CD4-positive, alpha-beta T cell (primary cell): ENCODE measurements at regions of chr11 and their contacts with region 1.

Region 1: GRCh38 chr11:60775420-60775961 is 9.6 kb upstream of the MS4A10 start:
- DNase-seq: peak; percentile 70 to 92 (median 81)
- ATAC-seq: peak; percentile 99
- H3K4me3 ChIP-seq: no peak overlapping the region
- H3K4me3 Mint-ChIP-seq: no peak overlapping the region
- H3K27ac ChIP-seq: no peak overlapping the region
- H3K27ac Mint-ChIP-seq: no peak overlapping the region
- H3K4me1 ChIP-seq: peaks cover 7% of the 10 kb centered on the region
- H3K4me1 Mint-ChIP-seq: peaks cover 6% of the 10 kb centered on the region
- H3K27me3 ChIP-seq: no peaks in the 10 kb centered on the region
- H3K27me3 Mint-ChIP-seq: no peaks in the 10 kb centered on the region
- CTCF ChIP-seq: peak; percentile 79

Region 2: GRCh38 chr11:60700689-60701480 is 74.6 kb before region 1 on chr11:
- CTCF ChIA-PET with region 1: no interaction called
- POLR2A ChIA-PET with region 1: no interaction called
- intact Hi-C with region 1: no loop called
- DNase-seq: no peak
- ATAC-seq: no peak
- H3K4me3 ChIP-seq: no peak overlapping the region
- H3K4me3 Mint-ChIP-seq: no peak overlapping the region
- H3K27ac ChIP-seq: no peak overlapping the region
- H3K27ac Mint-ChIP-seq: no peak overlapping the region
- H3K4me1 ChIP-seq: no peaks in the 10 kb centered on the region
- H3K4me1 Mint-ChIP-seq: no peaks in the 10 kb centered on the region
- H3K27me3 ChIP-seq: peaks cover 0 to 5% of the 10 kb centered on the region in 2 experiments
- H3K27me3 Mint-ChIP-seq: peaks cover 11% of the 10 kb centered on the region
- CTCF ChIP-seq: no peak

Region 3: GRCh38 chr11:60887556-60887955 is 112.1 kb after region 1 on chr11:
- CTCF ChIA-PET with region 1: interaction called, 6 read pairs
- POLR2A ChIA-PET with region 1: no interaction called
- intact Hi-C with region 1: loop called (anchors 2 to 5 kb)
- DNase-seq: peak in 7 of 14 experiments; percentile 11 to 64 (median 33)
- ATAC-seq: peak; percentile 67
- H3K4me3 ChIP-seq: no peak overlapping the region
- H3K4me3 Mint-ChIP-seq: no peak overlapping the region
- H3K27ac ChIP-seq: no peak overlapping the region
- H3K27ac Mint-ChIP-seq: peak overlapping the region; percentile 19
- H3K4me1 ChIP-seq: no peaks in the 10 kb centered on the region
- H3K4me1 Mint-ChIP-seq: peaks cover 6% of the 10 kb centered on the region
- H3K27me3 ChIP-seq: no peaks in the 10 kb centered on the region
- H3K27me3 Mint-ChIP-seq: no peaks in the 10 kb centered on the region
- CTCF ChIP-seq: no peak

Region 4: GRCh38 chr11:60899046-60899936 is 123.8 kb after region 1 on chr11:
- CTCF ChIA-PET with region 1: interaction called, 4 read pairs
- POLR2A ChIA-PET with region 1: no interaction called
- intact Hi-C with region 1: loop called (anchors 1 to 5 kb)
- DNase-seq: peak in 5 of 14 experiments; percentile 11 to 76 (median 41)
- ATAC-seq: peak; percentile 70
- H3K4me3 ChIP-seq: no peak overlapping the region
- H3K4me3 Mint-ChIP-seq: no peak overlapping the region
- H3K27ac ChIP-seq: no peak overlapping the region
- H3K27ac Mint-ChIP-seq: no peak overlapping the region
- H3K4me1 ChIP-seq: peaks cover 11% of the 10 kb centered on the region
- H3K4me1 Mint-ChIP-seq: peaks cover 21% of the 10 kb centered on the region
- H3K27me3 ChIP-seq: no peaks in the 10 kb centered on the region
- H3K27me3 Mint-ChIP-seq: no peaks in the 10 kb centered on the region
- CTCF ChIP-seq: peak; percentile 90

Region 5: GRCh38 chr11:61187505-61188130 is 412.1 kb after region 1 on chr11:
- CTCF ChIA-PET with region 1: no interaction called
- POLR2A ChIA-PET with region 1: no interaction called
- intact Hi-C with region 1: loop called in 1 of 2 experiments (anchors 5 kb)
- DNase-seq: peak; percentile 64 to 89 (median 75)
- ATAC-seq: peak; percentile 89
- H3K4me3 ChIP-seq: no peak overlapping the region
- H3K4me3 Mint-ChIP-seq: no peak overlapping the region
- H3K27ac ChIP-seq: no peak overlapping the region
- H3K27ac Mint-ChIP-seq: no peak overlapping the region
- H3K4me1 ChIP-seq: no peaks in the 10 kb centered on the region
- H3K4me1 Mint-ChIP-seq: no peaks in the 10 kb centered on the region
- H3K27me3 ChIP-seq: no peaks in the 10 kb centered on the region
- H3K27me3 Mint-ChIP-seq: peaks cover 3% of the 10 kb centered on the region
- CTCF ChIP-seq: peak; percentile 99